GM12878 (cell line): ENCODE measurements at regions of chr5 and their contacts with region 1.

Region 1: GRCh38 chr5:172293054-172293744 is 9.6 kb upstream of the UBTD2 start:
- DNase-seq: no peak
- ATAC-seq: peak; percentile 100
- H3K4me3 ChIP-seq: no peak overlapping the region
- H3K27ac ChIP-seq: no peak overlapping the region
- H3K4me1 ChIP-seq: no peaks in the 10 kb centered on the region
- H3K27me3 ChIP-seq: no peaks in the 10 kb centered on the region
- CTCF ChIP-seq: peak; percentile 87 to 94 (median 93)
- EP300 ChIP-seq: no peak
- POLR2A ChIP-seq: no peak
- RAD21 ChIP-seq: peak; percentile 98

Region 2: DNA sequence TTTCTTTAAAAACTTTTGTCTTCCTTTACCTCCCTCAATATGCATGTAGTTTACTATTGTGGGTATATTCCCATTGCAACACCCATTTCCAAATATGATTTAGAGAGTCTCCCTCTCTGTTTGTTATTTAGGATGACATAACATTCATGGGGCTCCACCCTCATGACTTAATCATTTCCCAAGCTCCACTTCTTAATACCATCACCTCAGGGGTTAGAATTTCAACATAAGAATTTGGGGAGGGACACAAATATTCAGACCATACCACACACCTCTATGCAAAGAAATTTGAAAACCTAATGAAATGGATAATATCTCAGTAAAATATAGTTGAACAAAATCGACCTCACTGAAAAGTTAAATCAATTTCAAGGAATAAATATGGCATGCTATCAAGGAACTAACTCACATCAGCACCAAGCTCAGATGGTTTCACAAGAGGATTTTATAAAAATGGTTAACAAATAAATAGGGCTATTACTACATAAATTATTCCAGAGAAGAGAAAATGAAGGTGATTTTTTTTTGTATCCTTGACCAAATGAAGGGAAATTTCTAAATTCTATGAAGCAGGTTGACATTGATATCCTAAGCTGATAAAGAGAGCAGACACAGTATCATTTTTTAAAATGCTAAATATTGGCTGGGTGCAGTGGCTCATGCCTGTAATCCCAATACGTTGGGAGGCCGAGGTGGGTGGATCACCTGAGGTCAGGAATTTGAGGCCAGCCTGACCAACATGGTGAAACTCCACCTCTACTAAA is 10.6 kb after region 1 on chr5:
- CTCF ChIA-PET with region 1: interaction called, 14 read pairs
- POLR2A ChIA-PET with region 1: no interaction called
- RAD21 ChIA-PET with region 1: no interaction called
- SMC1A ChIA-PET with region 1: interaction called, 5 read pairs
- in situ Hi-C with region 1: no loop called
- intact Hi-C with region 1: no loop called
- DNase-seq: no peak
- ATAC-seq: no peak
- H3K4me3 ChIP-seq: no peak overlapping the region
- H3K27ac ChIP-seq: no peak overlapping the region
- H3K4me1 ChIP-seq: no peaks in the 10 kb centered on the region; the same call in 1 of the 2 replicates
- H3K27me3 ChIP-seq: no peaks in the 10 kb centered on the region
- CTCF ChIP-seq: no peak
- EP300 ChIP-seq: no peak
- POLR2A ChIP-seq: no peak
- RAD21 ChIP-seq: no peak

Region 3: GRCh38 chr5:172322028-172322965 is 29.1 kb after region 1 on chr5:
- CTCF ChIA-PET with region 1: interaction called, 8 read pairs
- POLR2A ChIA-PET with region 1: no interaction called
- RAD21 ChIA-PET with region 1: interaction called, 5 read pairs
- SMC1A ChIA-PET with region 1: interaction called, 29 read pairs
- in situ Hi-C with region 1: no loop called
- intact Hi-C with region 1: no loop called
- DNase-seq: no peak
- ATAC-seq: peak; percentile 90
- H3K4me3 ChIP-seq: 0 out of 2 replicates have a peak overlapping the region, but pooled peaks have one; percentile 0
- H3K27ac ChIP-seq: peak overlapping the region; percentile 89
- H3K4me1 ChIP-seq: peaks cover 38% of the 10 kb centered on the region
- H3K27me3 ChIP-seq: no peaks in the 10 kb centered on the region
- CTCF ChIP-seq: no peak
- EP300 ChIP-seq: no peak
- POLR2A ChIP-seq: peak; percentile 46; the same call in 1 of the 2 replicates
- RAD21 ChIP-seq: no peak

Region 4: GRCh38 chr5:172370648-172371545 is 77.7 kb after region 1 on chr5:
- CTCF ChIA-PET with region 1: interaction called, 5 read pairs
- POLR2A ChIA-PET with region 1: no interaction called
- RAD21 ChIA-PET with region 1: interaction called, 6 read pairs
- SMC1A ChIA-PET with region 1: interaction called, 4 read pairs
- in situ Hi-C with region 1: no loop called
- intact Hi-C with region 1: loop called (anchors 2 kb)
- DNase-seq: no peak
- ATAC-seq: peak; percentile 65
- H3K4me3 ChIP-seq: no peak overlapping the region
- H3K27ac ChIP-seq: no peak overlapping the region
- H3K4me1 ChIP-seq: peaks cover 3% of the 10 kb centered on the region; the same call in 1 of the 2 replicates
- H3K27me3 ChIP-seq: no peaks in the 10 kb centered on the region
- CTCF ChIP-seq: peak; percentile 47 to 92 (median 73)
- EP300 ChIP-seq: no peak
- POLR2A ChIP-seq: no peak
- RAD21 ChIP-seq: peak; percentile 64